ENCODE measurements at regions of chr3 and their contacts with region 1.

Region 1: GRCh38 chr3:122383771-122384697 is at the start of gene FAM162A:
- DNase-seq: peak; percentile 95 to 96 (median 96)
- H3K4me3 ChIP-seq: peak within 1 kb of the TSS; percentile 81 to 98 (median 90)
- H3K27ac ChIP-seq: peak within 1 kb of the TSS; percentile 69 to 85
- H3K4me1 ChIP-seq: peaks cover 12 to 41% (median 27%) of the 10 kb centered on the region in 4 experiments
- H3K27me3 ChIP-seq: no peaks in the 10 kb centered on the region

Region 2: DNA sequence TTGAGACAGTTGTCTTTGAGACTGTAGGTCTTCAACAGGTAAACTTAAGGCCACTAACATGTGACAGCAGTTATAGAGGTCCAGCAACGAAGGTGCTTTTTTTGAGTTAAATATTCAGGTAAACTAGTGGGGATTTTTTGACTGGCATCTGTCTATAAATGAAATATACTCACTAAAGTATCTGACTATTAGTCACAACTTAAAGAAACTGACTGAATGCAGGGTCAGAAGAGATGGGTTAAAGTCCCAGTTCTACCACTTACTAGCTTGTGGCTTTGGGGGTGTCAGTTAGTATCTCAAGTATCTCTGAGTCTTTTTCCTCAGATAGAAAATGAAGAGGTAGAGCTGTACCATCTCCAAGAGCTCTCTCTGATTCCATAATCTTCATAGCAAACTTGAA is 19.0 kb before region 1 on chr3:
- CTCF ChIA-PET with region 1: interaction called, 21 read pairs
- POLR2A ChIA-PET with region 1: no interaction called
- DNase-seq: no peak
- H3K4me3 ChIP-seq: no peak overlapping the region
- H3K27ac ChIP-seq: no peak overlapping the region
- H3K4me1 ChIP-seq: no peaks in the 10 kb centered on the region
- H3K27me3 ChIP-seq: no peaks in the 10 kb centered on the region

Region 3: GRCh38 chr3:122415720-122416654 is 32.0 kb after region 1 on chr3 and contains the start of gene WDR5B:
- CTCF ChIA-PET with region 1: interaction called, 6 read pairs
- POLR2A ChIA-PET with region 1: interaction called, 12 read pairs
- DNase-seq: peak; percentile 98 to 99 (median 98)
- H3K4me3 ChIP-seq: peak within 1 kb of the TSS; percentile 53 to 93 (median 87)
- H3K27ac ChIP-seq: peak within 1 kb of the TSS; percentile 93 to 97
- H3K4me1 ChIP-seq: peaks cover 6 to 28% (median 23%) of the 10 kb centered on the region in 4 experiments
- H3K27me3 ChIP-seq: no peaks in the 10 kb centered on the region

Measured in common myeloid progenitor, CD34-positive (primary cell).